MCF 10A (cell line): ENCODE measurements at regions of chr7 and their contacts with region 1.

Region 1: GRCh38 chr7:74449809-74450397 is 3.8 kb upstream of the GTF2IRD1 start:
- DNase-seq: peak; percentile 71
- H3K4me3 Mint-ChIP-seq: no peak overlapping the region
- H3K27ac Mint-ChIP-seq: no peak overlapping the region
- H3K4me1 Mint-ChIP-seq: peaks cover 7% of the 10 kb centered on the region
- H3K27me3 Mint-ChIP-seq: no peaks in the 10 kb centered on the region
- CTCF ChIP-seq: peak; percentile 83

Region 2: DNA sequence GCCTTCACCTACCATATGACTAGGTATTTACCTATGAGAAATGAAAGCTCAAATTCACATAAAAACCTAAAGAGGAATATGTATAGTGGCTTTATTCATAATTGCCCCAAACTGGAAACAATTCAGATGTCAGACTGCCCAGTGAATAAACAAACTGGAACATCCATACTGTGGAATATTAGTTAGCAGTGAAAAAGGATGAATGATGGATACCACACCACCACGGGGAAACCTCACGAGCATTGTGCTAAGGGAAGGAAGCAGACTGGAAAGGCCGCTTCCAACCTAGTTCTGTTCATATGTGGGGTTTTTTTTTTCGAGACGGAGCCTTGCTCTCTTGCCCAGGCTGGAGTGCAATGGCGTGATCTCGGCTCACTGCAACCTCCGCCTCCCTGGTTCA is 20.6 kb after region 1 on chr7:
- CTCF ChIA-PET with region 1: interaction called, 10 read pairs
- POLR2A ChIA-PET with region 1: no interaction called
- intact Hi-C with region 1: no loop called
- DNase-seq: no peak
- H3K4me3 Mint-ChIP-seq: no peak overlapping the region
- H3K27ac Mint-ChIP-seq: no peak overlapping the region
- H3K4me1 Mint-ChIP-seq: peaks cover 20% of the 10 kb centered on the region
- H3K27me3 Mint-ChIP-seq: no peaks in the 10 kb centered on the region
- CTCF ChIP-seq: no peak

Region 3: GRCh38 chr7:74503943-74504342 is 54.0 kb after region 1 on chr7:
- CTCF ChIA-PET with region 1: no interaction called
- POLR2A ChIA-PET with region 1: no interaction called
- intact Hi-C with region 1: no loop called
- DNase-seq: no peak
- H3K4me3 Mint-ChIP-seq: no peak overlapping the region
- H3K27ac Mint-ChIP-seq: no peak overlapping the region
- H3K4me1 Mint-ChIP-seq: peaks cover 12% of the 10 kb centered on the region
- H3K27me3 Mint-ChIP-seq: no peaks in the 10 kb centered on the region
- CTCF ChIP-seq: no peak

Region 4: GRCh38 chr7:74514131-74514591 is 64.3 kb after region 1 on chr7:
- CTCF ChIA-PET with region 1: no interaction called
- POLR2A ChIA-PET with region 1: no interaction called
- intact Hi-C with region 1: no loop called
- DNase-seq: no peak
- H3K4me3 Mint-ChIP-seq: no peak overlapping the region
- H3K27ac Mint-ChIP-seq: peak overlapping the region; percentile 6
- H3K4me1 Mint-ChIP-seq: no peaks in the 10 kb centered on the region
- H3K27me3 Mint-ChIP-seq: no peaks in the 10 kb centered on the region
- CTCF ChIP-seq: no peak